HCT116 (cell line): ENCODE measurements at regions of chr6 and their contacts with region 1.

Region 1: GRCh38 chr6:150813319-150813992 is 52.0 kb upstream of the MTHFD1L start:
- DNase-seq: peak; percentile 92
- ATAC-seq: peak; percentile 69
- H3K4me3 ChIP-seq: peak overlapping the region; percentile 11 to 47
- H3K27ac ChIP-seq: peak overlapping the region; percentile 90
- H3K4me1 ChIP-seq: peaks cover 30 to 39% of the 10 kb centered on the region in 2 experiments
- H3K27me3 ChIP-seq: no peaks in the 10 kb centered on the region
- CTCF ChIP-seq: no peak
- POLR2A ChIP-seq: no peak
- RAD21 ChIP-seq: peak; percentile 49

Region 2: GRCh38 chr6:150004783-150005717 is 808.4 kb before region 1 on chr6:
- CTCF ChIA-PET with region 1: no interaction called
- POLR2A ChIA-PET with region 1: no interaction called
- RAD21 ChIA-PET with region 1: no interaction called
- intact Hi-C with region 1: loop called (anchors 10 kb)
- DNase-seq: peak; percentile 81
- ATAC-seq: peak; percentile 93
- H3K4me3 ChIP-seq: peak overlapping the region; percentile 81 to 91
- H3K27ac ChIP-seq: peak overlapping the region; percentile 57
- H3K4me1 ChIP-seq: peaks cover 18 to 33% of the 10 kb centered on the region in 2 experiments
- H3K27me3 ChIP-seq: no peaks in the 10 kb centered on the region
- CTCF ChIP-seq: no peak
- POLR2A ChIP-seq: peak; percentile 36
- RAD21 ChIP-seq: no peak

Region 3: DNA sequence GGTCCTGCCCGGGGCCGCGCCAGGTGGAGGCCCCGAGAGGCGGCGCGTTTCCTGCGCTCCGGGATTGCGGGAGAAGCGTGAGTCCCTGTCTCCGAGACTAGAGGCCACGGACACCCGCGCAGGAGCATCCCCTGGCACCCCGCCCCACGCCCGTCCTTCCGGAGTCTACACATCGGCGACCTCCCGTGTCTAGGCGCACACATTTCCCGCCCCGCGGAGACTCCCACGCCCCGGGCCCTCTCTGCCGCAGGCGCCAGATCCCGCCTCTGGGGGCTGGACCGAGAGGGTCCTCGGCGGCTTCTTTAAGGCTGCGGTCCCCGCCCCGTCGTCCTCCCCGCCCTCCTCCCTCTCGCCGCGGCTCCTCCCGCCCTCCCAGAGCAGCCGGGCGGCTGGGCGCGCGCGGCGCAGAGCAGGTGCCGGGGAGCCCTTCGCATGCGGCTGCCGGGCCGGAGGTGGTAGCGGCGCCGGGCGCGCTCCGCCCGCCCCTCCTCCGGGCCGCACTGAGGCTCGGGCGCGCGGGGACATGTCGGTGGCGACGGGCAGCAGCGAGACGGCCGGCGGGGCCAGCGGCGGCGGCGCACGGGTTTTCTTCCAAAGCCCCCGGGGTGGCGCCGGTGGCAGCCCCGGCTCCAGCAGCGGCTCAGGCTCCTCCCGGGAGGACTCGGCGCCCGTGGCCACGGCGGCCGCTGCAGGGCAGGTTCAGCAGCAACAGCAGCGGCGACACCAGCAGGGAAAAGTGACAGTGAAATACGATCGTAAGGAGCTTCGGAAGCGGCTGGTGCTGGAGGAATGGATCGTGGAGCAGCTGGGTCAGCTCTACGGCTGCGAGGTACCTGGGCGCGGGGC is 670.6 kb before region 1 on chr6 and contains the start of gene PPP1R14C:
- CTCF ChIA-PET with region 1: interaction called, 3 read pairs
- POLR2A ChIA-PET with region 1: no interaction called
- RAD21 ChIA-PET with region 1: no interaction called
- intact Hi-C with region 1: loop called (anchors 10 kb)
- DNase-seq: no peak
- ATAC-seq: peak; percentile 83
- H3K4me3 ChIP-seq: peak within 1 kb of the TSS; percentile 60 to 69
- H3K27ac ChIP-seq: peak within 1 kb of the TSS; percentile 32; the same call in 1 of the 2 replicates
- H3K4me1 ChIP-seq: peaks cover 15 to 38% of the 10 kb centered on the region in 2 experiments
- H3K27me3 ChIP-seq: no peaks in the 10 kb centered on the region
- CTCF ChIP-seq: no peak
- POLR2A ChIP-seq: no peak
- RAD21 ChIP-seq: no peak
- total RNA-seq, gene PPP1R14C: 7.8 TPM

Region 4: GRCh38 chr6:150409576-150410066 is 403.8 kb before region 1 on chr6:
- CTCF ChIA-PET with region 1: interaction called, 12 read pairs
- POLR2A ChIA-PET with region 1: no interaction called
- RAD21 ChIA-PET with region 1: no interaction called
- intact Hi-C with region 1: no loop called
- DNase-seq: no peak
- ATAC-seq: no peak
- H3K4me3 ChIP-seq: no peak overlapping the region
- H3K27ac ChIP-seq: no peak overlapping the region
- H3K4me1 ChIP-seq: no peaks in the 10 kb centered on the region; a peak in 1 of 4 replicates
- H3K27me3 ChIP-seq: no peaks in the 10 kb centered on the region
- CTCF ChIP-seq: no peak
- POLR2A ChIP-seq: no peak
- RAD21 ChIP-seq: no peak

Region 5: DNA sequence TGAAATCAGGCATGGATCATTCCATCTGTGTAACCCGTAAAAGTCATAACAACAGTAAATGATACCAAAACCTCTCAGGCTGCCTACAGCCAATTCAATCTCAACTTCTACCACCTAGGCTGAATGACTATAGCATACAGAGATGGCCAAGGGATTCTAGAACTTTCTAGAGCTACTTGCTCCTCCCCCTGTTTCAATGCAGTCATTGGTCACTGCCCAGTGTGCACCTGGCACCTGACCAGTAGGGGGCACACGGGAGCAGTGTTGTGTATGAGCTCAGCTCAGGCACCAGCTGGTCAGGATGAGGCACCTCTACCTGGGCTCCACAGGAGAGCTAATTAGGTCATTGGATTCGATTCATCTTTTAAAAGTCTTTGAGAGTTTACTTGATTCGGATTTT is 127.6 kb before region 1 on chr6:
- CTCF ChIA-PET with region 1: interaction called, 20 read pairs
- POLR2A ChIA-PET with region 1: interaction called, 7 read pairs
- RAD21 ChIA-PET with region 1: interaction called, 4 to 9 read pairs
- intact Hi-C with region 1: loop called (anchors 2 kb)
- DNase-seq: peak; percentile 39
- ATAC-seq: peak; percentile 99
- H3K4me3 ChIP-seq: no peak overlapping the region
- H3K27ac ChIP-seq: no peak overlapping the region
- H3K4me1 ChIP-seq: peaks cover 0 to 10% of the 10 kb centered on the region in 2 experiments; a peak in 2 of 4 replicates
- H3K27me3 ChIP-seq: no peaks in the 10 kb centered on the region
- CTCF ChIP-seq: peak; percentile 64 to 95 (median 90); a peak in 5 of 6 replicates
- POLR2A ChIP-seq: no peak
- RAD21 ChIP-seq: peak; percentile 74

Region 6: DNA sequence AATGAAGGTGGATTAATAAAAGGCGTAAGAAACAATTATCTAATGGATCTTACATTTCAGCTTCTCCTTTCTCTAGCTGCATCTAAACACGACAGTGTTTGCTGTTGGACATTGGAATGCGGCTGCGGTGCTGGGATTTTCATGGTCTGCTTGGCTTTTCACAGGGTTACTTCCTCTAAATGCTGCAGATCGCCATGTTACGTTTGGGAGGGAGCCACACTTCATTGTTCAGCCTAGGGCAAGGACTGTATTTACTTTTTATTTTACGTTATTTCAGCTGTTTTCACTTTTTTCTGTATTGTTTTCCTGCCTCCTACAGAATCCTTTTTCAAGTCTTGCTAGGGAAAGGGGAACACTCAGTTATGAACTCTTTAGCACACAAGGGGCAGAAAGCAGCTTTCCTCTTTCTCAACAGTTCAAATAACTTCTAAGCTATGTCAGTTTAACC is 45.9 kb before region 1 on chr6:
- CTCF ChIA-PET with region 1: no interaction called
- POLR2A ChIA-PET with region 1: no interaction called
- RAD21 ChIA-PET with region 1: no interaction called
- intact Hi-C with region 1: no loop called
- DNase-seq: no peak
- ATAC-seq: no peak
- H3K4me3 ChIP-seq: no peak overlapping the region
- H3K27ac ChIP-seq: no peak overlapping the region
- H3K4me1 ChIP-seq: no peaks in the 10 kb centered on the region
- H3K27me3 ChIP-seq: no peaks in the 10 kb centered on the region
- CTCF ChIP-seq: no peak
- POLR2A ChIP-seq: no peak
- RAD21 ChIP-seq: no peak

Region 7: DNA sequence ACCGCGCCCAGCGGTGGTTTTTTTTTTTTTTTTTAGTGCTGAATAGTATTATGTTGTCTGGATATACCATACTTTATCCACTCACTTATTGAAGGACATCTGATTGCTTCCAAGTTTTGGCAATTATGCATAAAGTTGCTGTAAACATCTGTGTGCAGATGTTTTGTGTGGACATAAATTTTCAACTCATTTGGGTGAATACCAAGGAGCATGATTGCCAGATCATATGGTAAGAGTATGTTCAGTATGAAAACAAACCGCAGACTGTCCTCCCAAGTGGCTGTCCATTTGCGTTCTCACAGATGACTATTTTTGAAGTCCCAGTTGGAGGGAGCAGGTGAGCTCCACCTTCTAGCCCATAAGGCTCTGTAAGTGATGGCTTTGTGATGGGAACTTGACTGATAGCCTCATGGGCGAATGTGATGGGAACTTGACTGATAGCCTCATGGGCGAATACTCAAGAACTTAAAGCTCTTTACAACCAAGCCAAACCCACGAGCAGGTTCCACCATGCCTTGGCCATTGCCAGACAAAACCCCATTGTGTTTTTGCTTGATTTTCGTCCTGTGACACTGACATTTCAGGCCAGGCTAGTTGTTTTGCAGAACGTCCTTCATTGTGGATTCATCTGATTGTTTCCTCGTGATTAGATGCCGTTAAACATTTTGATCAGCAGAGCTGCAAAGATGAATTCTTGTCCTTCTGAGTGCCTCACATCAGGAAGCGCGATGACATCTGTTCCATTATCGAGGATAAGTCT is 526.9 kb after region 1 on chr6:
- CTCF ChIA-PET with region 1: no interaction called
- POLR2A ChIA-PET with region 1: no interaction called
- RAD21 ChIA-PET with region 1: no interaction called
- intact Hi-C with region 1: loop called (anchors 2 kb)
- DNase-seq: no peak
- ATAC-seq: no peak
- H3K4me3 ChIP-seq: no peak overlapping the region
- H3K27ac ChIP-seq: no peak overlapping the region
- H3K4me1 ChIP-seq: peaks cover 0 to 21% of the 10 kb centered on the region in 2 experiments; a peak in 2 of 4 replicates
- H3K27me3 ChIP-seq: no peaks in the 10 kb centered on the region
- CTCF ChIP-seq: no peak
- POLR2A ChIP-seq: no peak
- RAD21 ChIP-seq: no peak